ENCODE measurements at regions of chr6 and their contacts with region 1.

Region 1: GRCh38 chr6:79078075-79079025 is at the start of gene PHIP:
- DNase-seq: peak; percentile 96
- H3K4me3 ChIP-seq: peak within 1 kb of the TSS; percentile 81 to 98 (median 90)
- H3K27ac ChIP-seq: peak within 1 kb of the TSS; percentile 84
- H3K4me1 ChIP-seq: peaks cover 20% of the 10 kb centered on the region
- H3K27me3 ChIP-seq: no peaks in the 10 kb centered on the region
- CTCF ChIP-seq: no peak
- POLR2A ChIP-seq: peak; percentile 70
- total RNA-seq, gene PHIP: 26.0 and 28.4 TPM in 2 replicates

Region 2: GRCh38 chr6:77466055-77466450 is 1612.3 kb before region 1 on chr6:
- CTCF ChIA-PET with region 1: no interaction called
- POLR2A ChIA-PET with region 1: no interaction called
- dilution Hi-C with region 1: no loop called
- intact Hi-C with region 1: loop called (anchors 5 kb)
- DNase-seq: peak; percentile 77
- H3K4me3 ChIP-seq: peak overlapping the region; percentile 52 to 97 (median 81)
- H3K27ac ChIP-seq: peak overlapping the region; percentile 38
- H3K4me1 ChIP-seq: peaks cover 32% of the 10 kb centered on the region
- H3K27me3 ChIP-seq: no peaks in the 10 kb centered on the region
- CTCF ChIP-seq: peak; percentile 70 to 77
- POLR2A ChIP-seq: no peak

Region 3: GRCh38 chr6:79094938-79095337 is 16.6 kb after region 1 on chr6:
- CTCF ChIA-PET with region 1: no interaction called
- POLR2A ChIA-PET with region 1: no interaction called
- dilution Hi-C with region 1: no loop called
- intact Hi-C with region 1: no loop called
- DNase-seq: no peak
- H3K4me3 ChIP-seq: no peak overlapping the region
- H3K27ac ChIP-seq: no peak overlapping the region
- H3K4me1 ChIP-seq: no peaks in the 10 kb centered on the region
- H3K27me3 ChIP-seq: no peaks in the 10 kb centered on the region
- CTCF ChIP-seq: no peak
- POLR2A ChIP-seq: no peak

Region 4: DNA sequence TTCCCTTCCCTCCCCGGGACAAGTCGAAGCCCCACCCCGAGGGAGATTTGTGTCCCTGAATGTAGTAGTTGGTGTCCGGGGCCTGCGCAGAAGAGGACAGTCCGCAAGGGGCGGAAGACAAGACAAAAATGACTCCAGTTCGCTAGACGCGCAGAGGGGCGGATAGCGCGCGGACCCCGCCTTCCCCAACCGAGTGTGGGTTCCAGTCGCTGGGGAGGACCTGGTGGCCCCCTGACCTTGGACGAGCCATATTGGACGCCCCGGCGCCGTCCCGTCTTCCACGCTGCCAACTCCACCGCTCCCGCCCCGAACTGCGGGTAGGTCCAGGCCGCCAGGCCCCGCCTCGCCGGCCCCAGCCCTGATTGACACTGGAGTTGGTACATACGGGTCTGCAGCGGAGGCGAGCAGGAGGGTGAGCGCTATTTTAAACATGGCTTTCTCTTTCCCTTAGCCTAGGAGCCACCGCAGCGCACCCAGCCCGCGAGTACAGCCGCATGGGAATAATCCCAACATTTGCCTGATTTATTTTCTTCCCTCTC is 155.3 kb after region 1 on chr6:
- CTCF ChIA-PET with region 1: no interaction called
- POLR2A ChIA-PET with region 1: no interaction called
- dilution Hi-C with region 1: no loop called
- intact Hi-C with region 1: loop called (anchors 1 kb)
- DNase-seq: peak; percentile 91
- H3K4me3 ChIP-seq: peak overlapping the region; percentile 57 to 100 (median 98)
- H3K27ac ChIP-seq: peak overlapping the region; percentile 75
- H3K4me1 ChIP-seq: peaks cover 20% of the 10 kb centered on the region
- H3K27me3 ChIP-seq: no peaks in the 10 kb centered on the region
- CTCF ChIP-seq: peak in 1 of 2 donors; percentile 26
- POLR2A ChIP-seq: peak; percentile 89

Region 5: GRCh38 chr6:79466207-79466834 is 388.0 kb after region 1 on chr6:
- CTCF ChIA-PET with region 1: interaction called, 6 read pairs
- POLR2A ChIA-PET with region 1: no interaction called
- dilution Hi-C with region 1: no loop called
- intact Hi-C with region 1: loop called (anchors 1 kb)
- DNase-seq: peak; percentile 59
- H3K4me3 ChIP-seq: no peak overlapping the region
- H3K27ac ChIP-seq: no peak overlapping the region
- H3K4me1 ChIP-seq: peaks cover 7% of the 10 kb centered on the region
- H3K27me3 ChIP-seq: no peaks in the 10 kb centered on the region
- CTCF ChIP-seq: peak; percentile 27 to 33
- POLR2A ChIP-seq: no peak

Region 6: GRCh38 chr6:79630883-79631692 is 552.7 kb after region 1 on chr6 and contains the start of gene SH3BGRL2:
- CTCF ChIA-PET with region 1: no interaction called
- POLR2A ChIA-PET with region 1: interaction called, 3 read pairs
- dilution Hi-C with region 1: no loop called
- intact Hi-C with region 1: loop called (anchors 5 kb)
- DNase-seq: peak; percentile 81
- H3K4me3 ChIP-seq: peak within 1 kb of the TSS; percentile 86 to 92 (median 89)
- H3K27ac ChIP-seq: peak within 1 kb of the TSS; percentile 46
- H3K4me1 ChIP-seq: peaks cover 39% of the 10 kb centered on the region
- H3K27me3 ChIP-seq: no peaks in the 10 kb centered on the region
- CTCF ChIP-seq: no peak
- POLR2A ChIP-seq: peak; percentile 49
- total RNA-seq, gene SH3BGRL2: 10.7 and 15.2 TPM in 2 replicates

Region 7: GRCh38 chr6:79813854-79814709 is 735.7 kb after region 1 on chr6:
- CTCF ChIA-PET with region 1: no interaction called
- POLR2A ChIA-PET with region 1: no interaction called
- dilution Hi-C with region 1: no loop called
- intact Hi-C with region 1: loop called (anchors 5 kb)
- DNase-seq: peak; percentile 73
- H3K4me3 ChIP-seq: no peak overlapping the region
- H3K27ac ChIP-seq: no peak overlapping the region
- H3K4me1 ChIP-seq: no peaks in the 10 kb centered on the region
- H3K27me3 ChIP-seq: peaks cover 6 to 9% of the 10 kb centered on the region in 2 experiments
- CTCF ChIP-seq: peak; percentile 81
- POLR2A ChIP-seq: no peak

Measured in endothelial cell of umbilical vein (primary cell).